Thyroid gland (tissue), 4 donors: ENCODE measurements at regions of chr1 and their contacts with region 1.

Region 1: GRCh38 chr1:70134148-70134547 is 71.2 kb downstream of the LRRC40 start:
- DNase-seq: no peak
- H3K4me3 ChIP-seq: no peak overlapping the region
- H3K27ac ChIP-seq: no peak overlapping the region
- H3K4me1 ChIP-seq: no peaks in the 10 kb centered on the region
- H3K27me3 ChIP-seq: no peaks in the 10 kb centered on the region
- CTCF ChIP-seq: no peak
- POLR2A ChIP-seq: no peak

Region 2: GRCh38 chr1:70509996-70510876 is 376.1 kb after region 1 on chr1:
- intact Hi-C with region 1: loop called (anchors 10 kb)
- DNase-seq: peak in 1 of 2 donors; percentile 7
- H3K4me3 ChIP-seq: no peak overlapping the region
- H3K27ac ChIP-seq: no peak overlapping the region
- H3K4me1 ChIP-seq: no peaks in the 10 kb centered on the region
- H3K27me3 ChIP-seq: no peaks in the 10 kb centered on the region
- CTCF ChIP-seq: peak; percentile 43 to 85 (median 63)
- POLR2A ChIP-seq: no peak